ENCODE measurements at regions of chr1 and their contacts with region 1.

Region 1: GRCh38 chr1:181062836-181063428 is 25.6 kb upstream of the IER5 start:
- H3K4me3 Mint-ChIP-seq: peak overlapping the region; percentile 80
- H3K27ac Mint-ChIP-seq: peak overlapping the region; percentile 93
- H3K4me1 Mint-ChIP-seq: peaks cover 55% of the 10 kb centered on the region
- H3K27me3 Mint-ChIP-seq: no peaks in the 10 kb centered on the region

Region 2: GRCh38 chr1:180849036-180849775 is 213.7 kb before region 1 on chr1:
- intact Hi-C with region 1: no loop called
- H3K4me3 Mint-ChIP-seq: no peak overlapping the region
- H3K27ac Mint-ChIP-seq: no peak overlapping the region
- H3K4me1 Mint-ChIP-seq: peaks cover 18% of the 10 kb centered on the region
- H3K27me3 Mint-ChIP-seq: peaks cover 31% of the 10 kb centered on the region

Region 3: DNA sequence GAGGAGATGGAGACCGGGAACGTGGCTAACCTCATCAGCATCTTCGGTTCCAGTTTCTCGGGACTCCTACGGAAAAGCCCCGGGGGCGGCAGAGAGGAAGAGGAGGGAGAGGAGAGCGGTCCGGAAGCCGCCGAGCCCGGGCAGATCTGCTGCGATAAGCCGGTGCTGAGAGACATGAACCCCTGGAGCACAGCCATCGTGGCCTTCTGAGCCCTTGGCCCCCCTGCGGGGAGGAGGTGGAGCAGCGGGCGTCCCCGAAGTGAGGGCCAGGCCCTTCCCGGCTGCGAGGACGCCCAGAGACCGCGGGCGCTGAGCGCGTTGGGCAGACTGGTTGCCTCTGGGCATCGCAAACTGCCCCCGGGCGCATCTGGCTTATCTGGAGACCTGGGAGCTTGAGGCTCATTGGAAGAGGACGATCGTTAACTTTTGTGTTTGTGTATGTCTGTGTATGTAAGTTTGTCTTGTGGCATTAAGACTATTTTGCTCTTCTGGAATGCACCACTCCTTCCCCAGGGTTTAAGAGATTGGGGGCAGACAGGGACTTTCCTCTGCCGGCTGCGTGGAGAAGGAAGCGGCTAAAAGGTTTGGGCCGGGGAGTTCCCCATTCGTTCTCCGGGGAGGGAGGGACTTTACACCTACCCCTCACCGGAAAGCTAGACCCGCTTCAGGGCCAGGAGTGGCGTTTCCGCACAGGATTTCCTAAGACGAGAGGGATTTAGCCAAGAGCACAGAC is 26.9 kb after region 1 on chr1:
- intact Hi-C with region 1: loop called (anchors 1 kb)
- H3K4me3 Mint-ChIP-seq: peak overlapping the region; percentile 80
- H3K27ac Mint-ChIP-seq: peak overlapping the region; percentile 93
- H3K4me1 Mint-ChIP-seq: peaks cover 70% of the 10 kb centered on the region
- H3K27me3 Mint-ChIP-seq: no peaks in the 10 kb centered on the region